Endothelial cell of umbilical vein (primary cell): ENCODE measurements at regions of chr6 and their contacts with region 1.

Region 1: DNA sequence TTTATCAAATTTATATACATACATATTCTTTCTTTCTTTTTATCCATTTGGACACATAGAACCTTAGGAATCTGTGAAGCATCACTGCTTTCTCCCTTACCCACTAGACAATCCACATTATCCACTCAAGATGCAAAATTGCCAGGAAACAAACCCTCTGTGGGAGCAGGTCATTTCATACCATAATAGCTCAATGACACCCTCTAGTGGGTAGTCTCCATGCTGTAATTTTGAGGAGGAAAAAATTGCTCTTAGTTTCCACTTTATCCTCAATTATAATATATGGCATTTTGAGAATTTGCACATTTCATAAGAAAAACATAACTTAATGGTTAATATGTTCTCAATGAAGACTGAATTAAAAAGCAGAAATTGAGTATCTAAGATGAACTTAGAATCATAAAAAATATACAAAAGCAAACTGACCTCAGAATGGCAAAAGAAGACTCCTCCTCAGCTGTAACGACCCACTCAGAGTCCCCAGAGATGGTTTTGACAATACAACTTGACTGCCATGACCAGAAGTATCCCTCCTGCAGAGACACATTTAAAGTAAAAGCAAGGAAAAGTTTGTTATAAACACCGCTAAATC is 164.1 kb downstream of the FRK start:
- DNase-seq: peak; percentile 37
- H3K4me3 ChIP-seq: no peak overlapping the region
- H3K27ac ChIP-seq: no peak overlapping the region
- H3K4me1 ChIP-seq: no peaks in the 10 kb centered on the region
- H3K27me3 ChIP-seq: no peaks in the 10 kb centered on the region
- CTCF ChIP-seq: peak; percentile 47 to 55
- POLR2A ChIP-seq: no peak

Region 2: GRCh38 chr6:113980937-113981554 is 1915.6 kb before region 1 on chr6:
- CTCF ChIA-PET with region 1: interaction called, 41 read pairs
- POLR2A ChIA-PET with region 1: no interaction called
- dilution Hi-C with region 1: no loop called
- intact Hi-C with region 1: no loop called
- DNase-seq: peak; percentile 35
- H3K4me3 ChIP-seq: no peak overlapping the region
- H3K27ac ChIP-seq: no peak overlapping the region
- H3K4me1 ChIP-seq: no peaks in the 10 kb centered on the region
- H3K27me3 ChIP-seq: no peaks in the 10 kb centered on the region
- CTCF ChIP-seq: peak; percentile 59 to 71
- POLR2A ChIP-seq: no peak

Region 3: DNA sequence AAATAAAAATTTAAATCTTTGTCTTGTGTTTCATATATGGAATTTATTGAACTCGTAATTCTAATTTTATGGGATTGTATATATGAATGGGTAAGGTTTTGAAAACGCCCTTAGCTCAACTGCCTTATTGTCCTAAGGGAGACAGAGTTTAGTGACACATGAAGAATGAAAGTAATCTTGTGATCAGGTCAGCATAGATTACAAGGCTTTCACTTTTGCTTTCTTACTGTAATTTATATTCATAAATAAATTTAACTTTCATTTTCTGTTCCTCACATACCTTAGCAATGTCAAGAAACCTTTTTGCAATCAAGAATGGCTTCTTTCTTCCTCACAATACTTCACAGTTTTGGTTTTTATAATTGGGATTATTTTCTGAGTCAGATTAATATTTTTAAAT is 798.8 kb after region 1 on chr6:
- CTCF ChIA-PET with region 1: no interaction called
- POLR2A ChIA-PET with region 1: no interaction called
- dilution Hi-C with region 1: no loop called
- intact Hi-C with region 1: no loop called
- DNase-seq: no peak
- H3K4me3 ChIP-seq: no peak overlapping the region
- H3K27ac ChIP-seq: no peak overlapping the region
- H3K4me1 ChIP-seq: no peaks in the 10 kb centered on the region
- H3K27me3 ChIP-seq: no peaks in the 10 kb centered on the region
- CTCF ChIP-seq: no peak
- POLR2A ChIP-seq: no peak